Activated CD4-positive, alpha-beta memory T cell treated with anti-CD3 and anti-CD28 coated beads, Interleukin-2, amount 10 ng/mL, durations not matched to agents 7 days and 5 days (primary cell): ENCODE measurements at regions of chr3 and their contacts with region 1.

Region 1: DNA sequence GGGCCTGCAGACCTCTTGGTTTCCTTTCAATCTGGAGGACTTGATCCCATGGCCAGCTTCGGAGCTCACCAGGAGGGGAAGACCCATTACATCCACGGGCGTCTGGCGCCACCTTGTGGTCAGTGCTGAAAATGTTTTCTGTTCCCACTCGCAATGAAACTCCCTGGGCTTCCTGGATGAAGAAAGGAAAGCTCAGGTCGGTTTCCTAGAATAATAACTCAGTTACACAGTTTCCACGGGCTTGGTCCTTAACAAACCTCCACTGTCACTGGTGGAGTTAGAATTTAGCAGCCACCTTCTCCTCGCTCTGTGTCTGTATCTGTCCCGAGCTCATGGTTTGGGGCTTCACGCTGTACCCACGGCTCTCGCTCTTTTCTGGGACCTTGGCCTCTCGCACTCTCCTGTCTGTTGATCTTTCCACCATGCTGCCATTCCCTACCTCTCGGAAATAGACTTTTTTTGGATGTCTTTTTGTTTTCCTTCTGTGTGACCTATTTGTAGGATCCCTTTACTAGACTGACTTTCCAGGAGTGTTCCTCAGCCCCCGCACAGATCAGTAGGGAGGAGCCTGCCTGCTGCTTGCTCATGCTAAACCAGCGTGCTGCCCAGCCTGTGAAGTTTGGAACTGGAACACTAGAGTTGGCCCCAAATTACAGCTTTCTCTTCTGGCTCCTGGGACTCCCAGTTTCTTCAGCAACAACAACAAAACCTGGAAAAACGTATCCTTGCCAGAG is 56.3 kb downstream of the IL20RB start:
- DNase-seq: peak; percentile 83
- H3K4me3 Mint-ChIP-seq: peak overlapping the region; percentile 61
- H3K27ac Mint-ChIP-seq: no peak overlapping the region
- H3K4me1 Mint-ChIP-seq: peaks cover 14% of the 10 kb centered on the region
- H3K27me3 Mint-ChIP-seq: peaks cover 2% of the 10 kb centered on the region

Region 2: GRCh38 chr3:136075218-136075808 is 938.8 kb before region 1 on chr3:
- CTCF ChIA-PET with region 1: interaction called, 13 read pairs
- POLR2A ChIA-PET with region 1: interaction called, 4 read pairs
- DNase-seq: peak; percentile 78
- H3K4me3 Mint-ChIP-seq: no peak overlapping the region
- H3K27ac Mint-ChIP-seq: no peak overlapping the region
- H3K4me1 Mint-ChIP-seq: peaks cover 7% of the 10 kb centered on the region
- H3K27me3 Mint-ChIP-seq: peaks cover 2% of the 10 kb centered on the region

Region 3: GRCh38 chr3:136305878-136306277 is 708.2 kb before region 1 on chr3:
- CTCF ChIA-PET with region 1: interaction called, 22 read pairs
- POLR2A ChIA-PET with region 1: no interaction called
- DNase-seq: no peak
- H3K4me3 Mint-ChIP-seq: no peak overlapping the region
- H3K27ac Mint-ChIP-seq: no peak overlapping the region
- H3K4me1 Mint-ChIP-seq: no peaks in the 10 kb centered on the region
- H3K27me3 Mint-ChIP-seq: no peaks in the 10 kb centered on the region

Region 4: GRCh38 chr3:136390574-136390973 is 623.5 kb before region 1 on chr3:
- CTCF ChIA-PET with region 1: interaction called, 32 read pairs
- POLR2A ChIA-PET with region 1: no interaction called
- DNase-seq: no peak
- H3K4me3 Mint-ChIP-seq: no peak overlapping the region
- H3K27ac Mint-ChIP-seq: no peak overlapping the region
- H3K4me1 Mint-ChIP-seq: peaks cover 2% of the 10 kb centered on the region
- H3K27me3 Mint-ChIP-seq: no peaks in the 10 kb centered on the region

Region 5: GRCh38 chr3:136787349-136787748 is 226.8 kb before region 1 on chr3:
- CTCF ChIA-PET with region 1: interaction called, 12 read pairs
- POLR2A ChIA-PET with region 1: no interaction called
- DNase-seq: peak; percentile 54
- H3K4me3 Mint-ChIP-seq: no peak overlapping the region
- H3K27ac Mint-ChIP-seq: peak overlapping the region; percentile 57
- H3K4me1 Mint-ChIP-seq: peaks cover 15% of the 10 kb centered on the region
- H3K27me3 Mint-ChIP-seq: peaks cover 5% of the 10 kb centered on the region

Region 6: GRCh38 chr3:137032465-137033120 is 18.5 kb after region 1 on chr3:
- CTCF ChIA-PET with region 1: interaction called, 24 read pairs
- POLR2A ChIA-PET with region 1: no interaction called
- DNase-seq: peak; percentile 76
- H3K4me3 Mint-ChIP-seq: no peak overlapping the region
- H3K27ac Mint-ChIP-seq: no peak overlapping the region
- H3K4me1 Mint-ChIP-seq: peaks cover 7% of the 10 kb centered on the region
- H3K27me3 Mint-ChIP-seq: peaks cover 13% of the 10 kb centered on the region